Mammary epithelial cell (primary cell): ENCODE measurements at regions of chr1 and their contacts with region 1.

Region 1: GRCh38 chr1:225777583-225778336 is at the start of gene SRP9:
- DNase-seq: peak; percentile 99
- H3K4me3 ChIP-seq: peak within 1 kb of the TSS; percentile 74 to 99 (median 77)
- H3K27ac ChIP-seq: peak within 1 kb of the TSS; percentile 92
- H3K4me1 ChIP-seq: peaks cover 25% of the 10 kb centered on the region
- H3K27me3 ChIP-seq: no peaks in the 10 kb centered on the region
- CTCF ChIP-seq: peak; percentile 78 to 94
- total RNA-seq, gene SRP9: 164 to 214 TPM

Region 2: DNA sequence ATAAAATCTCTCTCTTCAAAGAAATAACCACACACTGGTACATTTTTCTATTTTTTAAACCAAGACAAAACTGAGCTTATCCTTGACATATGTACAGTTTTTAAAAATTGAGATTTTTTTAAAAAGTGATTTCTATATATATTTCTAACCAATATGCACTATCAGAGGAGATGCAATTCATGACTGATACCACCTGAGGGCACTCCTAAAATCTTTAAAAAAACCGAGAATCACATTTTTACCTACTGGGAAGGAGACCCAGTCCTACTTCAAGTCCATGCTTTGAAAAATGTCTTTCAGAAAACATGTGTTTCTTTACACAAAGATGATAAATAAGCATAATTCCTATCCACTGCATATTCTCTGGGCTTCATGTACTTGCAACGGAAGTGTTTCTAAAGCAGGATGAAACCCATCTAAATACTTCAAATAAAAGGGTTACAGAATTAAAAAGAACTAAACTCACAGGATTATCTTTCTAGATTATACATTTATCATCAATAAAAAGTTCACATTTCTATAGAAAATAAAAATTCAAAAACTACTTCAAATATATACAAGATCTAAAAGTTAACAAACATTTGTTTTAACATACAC is 223.4 kb before region 1 on chr1:
- CTCF ChIA-PET with region 1: no interaction called
- dilution Hi-C with region 1: loop called (anchors 5 kb)
- in situ Hi-C with region 1: loop called in 1 of 2 experiments (anchors 10 kb)
- intact Hi-C with region 1: loop called (anchors 1 kb)
- DNase-seq: no peak
- H3K4me3 ChIP-seq: no peak overlapping the region
- H3K27ac ChIP-seq: no peak overlapping the region
- H3K4me1 ChIP-seq: no peaks in the 10 kb centered on the region
- H3K27me3 ChIP-seq: no peaks in the 10 kb centered on the region
- CTCF ChIP-seq: peak; percentile 52 to 57

Region 3: DNA sequence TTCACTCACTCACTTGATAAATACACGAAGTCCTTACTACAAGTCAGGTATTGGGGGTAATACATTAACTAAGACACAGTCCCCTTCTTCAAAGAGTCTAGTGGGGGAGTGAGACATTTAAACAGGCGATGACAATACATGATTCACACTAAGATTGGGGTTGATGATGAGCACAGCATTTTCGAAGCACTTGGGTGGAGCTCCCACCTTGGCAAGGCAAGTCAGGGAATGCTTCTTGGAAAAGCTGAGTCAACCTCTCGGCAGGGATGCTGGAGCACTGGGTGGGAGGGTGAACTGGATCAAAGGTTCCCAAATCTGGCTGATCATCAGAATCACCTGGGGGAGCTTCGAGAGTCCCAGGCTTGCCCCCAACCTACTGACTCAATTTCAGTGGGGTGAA is 67.0 kb before region 1 on chr1:
- CTCF ChIA-PET with region 1: no interaction called
- dilution Hi-C with region 1: no loop called
- in situ Hi-C with region 1: no loop called
- intact Hi-C with region 1: no loop called
- DNase-seq: peak; percentile 76
- H3K4me3 ChIP-seq: no peak overlapping the region
- H3K27ac ChIP-seq: no peak overlapping the region
- H3K4me1 ChIP-seq: peaks cover 29% of the 10 kb centered on the region
- H3K27me3 ChIP-seq: no peaks in the 10 kb centered on the region
- CTCF ChIP-seq: no peak

Region 4: GRCh38 chr1:225825607-225826007 is 47.8 kb after region 1 on chr1:
- CTCF ChIA-PET with region 1: no interaction called
- dilution Hi-C with region 1: no loop called
- in situ Hi-C with region 1: no loop called
- intact Hi-C with region 1: loop called (anchors 1 kb)
- DNase-seq: no peak
- H3K4me3 ChIP-seq: no peak overlapping the region
- H3K27ac ChIP-seq: no peak overlapping the region
- H3K4me1 ChIP-seq: peaks cover 17% of the 10 kb centered on the region
- H3K27me3 ChIP-seq: no peaks in the 10 kb centered on the region
- CTCF ChIP-seq: no peak

Region 5: DNA sequence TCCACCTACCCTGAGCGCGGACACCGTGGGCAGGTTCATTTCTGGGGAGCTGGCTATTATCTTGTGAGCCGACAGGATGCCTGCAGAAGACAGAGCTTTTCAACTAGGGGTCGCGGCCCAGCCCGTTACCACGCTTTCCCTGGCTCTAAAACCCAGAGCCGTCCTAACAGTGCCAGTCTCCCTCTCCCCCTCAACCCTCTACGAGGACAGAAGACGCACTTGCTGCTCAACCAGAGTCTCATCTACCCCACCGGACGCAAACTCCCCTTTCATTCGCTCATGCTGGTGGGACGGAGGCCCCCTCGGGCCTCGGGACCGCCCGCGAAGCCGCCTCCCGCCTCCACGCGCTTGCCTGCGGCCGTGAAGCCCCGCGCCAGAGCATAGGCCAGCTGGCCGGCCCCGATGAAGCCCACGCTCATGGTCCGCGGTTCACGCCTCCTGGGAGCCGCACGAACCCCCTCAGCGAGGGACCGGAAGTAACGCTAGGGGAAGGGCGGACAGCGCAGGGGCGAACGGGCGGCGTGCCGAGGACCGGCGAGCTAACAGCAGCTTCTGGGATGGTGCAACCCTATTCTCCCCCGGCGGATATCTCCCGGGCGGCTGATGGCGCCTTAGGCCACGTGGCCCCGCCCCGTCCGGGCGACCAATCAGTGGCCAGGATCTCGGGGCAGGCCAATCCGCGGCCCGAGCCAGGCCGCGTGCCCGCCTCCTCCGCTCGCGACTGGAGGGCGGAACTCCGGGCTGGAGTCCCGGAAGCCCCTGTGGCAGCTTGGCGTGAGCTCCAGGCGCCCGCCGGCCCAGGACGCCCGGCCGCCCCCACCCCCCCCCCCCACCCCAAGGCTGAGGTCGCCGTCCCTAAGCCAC is 146.2 kb after region 1 on chr1 and contains the start of gene PYCR2:
- CTCF ChIA-PET with region 1: no interaction called
- dilution Hi-C with region 1: no loop called
- in situ Hi-C with region 1: no loop called
- intact Hi-C with region 1: loop called (anchors 5 kb)
- DNase-seq: peak; percentile 94
- H3K4me3 ChIP-seq: peak within 1 kb of the TSS; percentile 69 to 97 (median 75)
- H3K27ac ChIP-seq: peak within 1 kb of the TSS; percentile 69
- H3K4me1 ChIP-seq: peaks cover 40% of the 10 kb centered on the region
- H3K27me3 ChIP-seq: no peaks in the 10 kb centered on the region
- CTCF ChIP-seq: no peak
- total RNA-seq, gene PYCR2: 64.2 to 73.1 TPM

Region 6: DNA sequence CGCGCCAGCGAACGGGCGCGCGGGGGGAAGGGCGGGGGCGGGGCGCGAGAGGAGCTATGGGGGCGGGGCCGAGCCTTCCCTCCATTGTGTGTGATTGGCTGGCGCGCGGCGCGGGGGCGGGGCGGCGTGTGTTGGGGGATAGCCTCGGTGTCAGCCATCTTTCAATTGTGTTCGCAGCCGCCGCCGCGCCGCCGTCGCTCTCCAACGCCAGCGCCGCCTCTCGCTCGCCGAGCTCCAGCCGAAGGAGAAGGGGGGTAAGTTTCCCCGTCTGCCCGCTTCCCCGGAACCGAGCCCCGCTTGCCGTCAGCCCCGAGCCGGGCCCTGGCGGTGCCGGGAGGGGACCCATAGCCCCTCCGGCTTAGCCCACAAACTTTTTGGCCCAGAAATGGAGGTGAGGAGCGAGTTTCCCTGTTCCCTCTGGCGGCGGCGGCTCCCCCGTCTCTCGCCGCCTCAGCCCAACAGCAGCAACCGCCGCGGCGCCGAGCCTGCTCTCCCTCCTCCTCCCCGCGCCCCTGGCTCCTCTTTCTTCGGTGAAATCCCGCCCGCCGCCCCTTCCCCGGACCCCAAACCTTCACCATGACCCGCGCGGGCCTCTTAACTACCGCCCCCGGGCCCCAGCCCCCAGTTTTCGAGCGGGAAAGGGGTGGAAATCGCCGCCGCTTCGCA is 284.9 kb after region 1 on chr1 and contains the start of gene H3-3A:
- CTCF ChIA-PET with region 1: no interaction called
- dilution Hi-C with region 1: no loop called
- in situ Hi-C with region 1: no loop called
- intact Hi-C with region 1: loop called (anchors 5 kb)
- DNase-seq: peak; percentile 92
- H3K4me3 ChIP-seq: peak within 1 kb of the TSS; percentile 86 to 99 (median 91)
- H3K27ac ChIP-seq: peak within 1 kb of the TSS; percentile 86
- H3K4me1 ChIP-seq: peaks cover 19% of the 10 kb centered on the region
- H3K27me3 ChIP-seq: no peaks in the 10 kb centered on the region
- CTCF ChIP-seq: peak in 1 of 2 donors; percentile 13
- total RNA-seq, gene H3-3A: 209 to 262 TPM